ENCODE measurements at regions of chr3 and their contacts with region 1.

Region 1: GRCh38 chr3:127768346-127769008 is 53.8 kb downstream of the MGLL start:
- DNase-seq: peak; percentile 95
- H3K4me3 ChIP-seq: no peak overlapping the region
- H3K27ac ChIP-seq: peak overlapping the region; percentile 90
- H3K27me3 ChIP-seq: no peaks in the 10 kb centered on the region
- CTCF ChIP-seq: 0 out of 2 replicates have a peak, but pooled peaks have one; percentile 3

Region 2: GRCh38 chr3:127658234-127658633 is 110.2 kb before region 1 on chr3:
- CTCF ChIA-PET with region 1: no interaction called
- POLR2A ChIA-PET with region 1: interaction called, 12 read pairs
- DNase-seq: no peak
- H3K4me3 ChIP-seq: no peak overlapping the region
- H3K27ac ChIP-seq: no peak overlapping the region
- H3K27me3 ChIP-seq: no peaks in the 10 kb centered on the region
- CTCF ChIP-seq: no peak

Region 3: GRCh38 chr3:127735767-127736704 is 32.4 kb before region 1 on chr3:
- CTCF ChIA-PET with region 1: interaction called, 3 read pairs
- POLR2A ChIA-PET with region 1: interaction called, 14 read pairs
- DNase-seq: peak; percentile 44
- H3K4me3 ChIP-seq: no peak overlapping the region
- H3K27ac ChIP-seq: peak overlapping the region; percentile 71
- H3K27me3 ChIP-seq: no peaks in the 10 kb centered on the region
- CTCF ChIP-seq: no peak

Region 4: GRCh38 chr3:127831723-127832172 is 63.3 kb after region 1 on chr3:
- CTCF ChIA-PET with region 1: no interaction called
- POLR2A ChIA-PET with region 1: no interaction called
- DNase-seq: no peak
- H3K4me3 ChIP-seq: no peak overlapping the region
- H3K27ac ChIP-seq: no peak overlapping the region
- H3K27me3 ChIP-seq: no peaks in the 10 kb centered on the region
- CTCF ChIP-seq: peak; percentile 69

Region 5: GRCh38 chr3:127984241-127984975 is 215.9 kb after region 1 on chr3:
- CTCF ChIA-PET with region 1: no interaction called
- POLR2A ChIA-PET with region 1: no interaction called
- DNase-seq: no peak
- H3K4me3 ChIP-seq: no peak overlapping the region
- H3K27ac ChIP-seq: no peak overlapping the region
- H3K27me3 ChIP-seq: peaks cover 27% of the 10 kb centered on the region
- CTCF ChIP-seq: no peak

Measured in AG04450 (cell line).